ENCODE measurements at regions of chr4 and their contacts with region 1.

Region 1: GRCh38 chr4:102344954-102345794 is at the start of gene SLC39A8:
- DNase-seq: peak; percentile 95
- H3K4me3 Mint-ChIP-seq: peak within 1 kb of the TSS; percentile 78
- H3K27ac Mint-ChIP-seq: peak within 1 kb of the TSS; percentile 96
- H3K4me1 Mint-ChIP-seq: peaks cover 43% of the 10 kb centered on the region
- H3K27me3 Mint-ChIP-seq: peaks cover 1% of the 10 kb centered on the region
- total RNA-seq, gene SLC39A8: 64.6 to 66.9 TPM

Region 2: DNA sequence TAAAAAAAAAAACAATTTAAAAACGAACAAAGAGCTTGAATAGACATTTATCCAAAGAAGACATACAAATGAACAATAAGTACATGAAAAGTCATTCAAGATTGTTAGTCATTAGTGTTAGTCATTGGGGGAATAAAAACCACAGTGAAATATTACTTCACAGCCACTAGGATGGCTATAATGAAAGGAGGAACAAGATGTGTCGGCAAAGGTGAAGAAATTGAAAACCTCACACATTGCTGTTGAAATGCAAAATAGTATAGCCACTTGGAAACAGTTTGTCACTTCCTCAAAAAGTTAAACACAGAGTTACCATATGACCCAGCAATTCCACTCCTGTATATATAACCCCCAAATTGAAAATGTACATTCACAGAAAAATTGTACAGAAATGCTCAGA is 45.3 kb after region 1 on chr4:
- CTCF ChIA-PET with region 1: interaction called, 11 read pairs
- POLR2A ChIA-PET with region 1: interaction called, 4 read pairs
- intact Hi-C with region 1: loop called (anchors 1 kb)
- DNase-seq: no peak
- H3K4me3 Mint-ChIP-seq: no peak overlapping the region
- H3K27ac Mint-ChIP-seq: no peak overlapping the region
- H3K4me1 Mint-ChIP-seq: peaks cover 14% of the 10 kb centered on the region
- H3K27me3 Mint-ChIP-seq: peaks cover 15% of the 10 kb centered on the region

Region 3: DNA sequence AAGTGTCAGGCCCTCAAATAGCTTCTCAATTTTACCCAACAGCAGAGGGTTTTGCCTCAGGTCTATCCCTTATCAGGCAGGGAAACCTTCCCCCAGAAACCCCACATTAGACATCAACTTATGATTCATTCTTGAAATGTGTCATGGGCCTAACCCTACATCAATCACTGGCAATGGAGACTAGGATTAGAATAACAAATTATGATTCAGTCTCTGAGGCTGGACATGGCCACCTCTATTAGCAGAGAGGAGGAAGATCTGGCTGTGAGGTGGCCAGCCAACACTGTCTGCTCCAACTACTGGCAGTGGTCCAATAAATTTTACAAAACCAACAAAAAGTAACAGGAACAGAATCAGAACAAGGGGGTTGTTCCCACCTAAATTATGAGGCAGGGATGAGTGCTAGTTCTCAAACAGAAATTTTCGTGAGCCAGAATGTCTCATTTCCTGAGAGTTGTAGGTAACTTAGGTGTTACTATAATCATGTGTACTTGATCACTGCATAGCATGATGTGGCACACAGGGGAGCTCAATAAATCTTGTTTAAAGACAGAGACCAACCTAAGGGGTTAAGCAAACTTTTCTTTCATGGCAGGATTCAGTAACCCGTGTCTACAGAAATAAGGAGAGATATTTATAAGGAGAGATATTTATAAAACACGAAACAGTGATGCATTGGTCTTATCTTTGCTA is 282.8 kb after region 1 on chr4:
- CTCF ChIA-PET with region 1: interaction called, 6 read pairs
- POLR2A ChIA-PET with region 1: no interaction called
- intact Hi-C with region 1: loop called (anchors 1 kb)
- DNase-seq: peak; percentile 37
- H3K4me3 Mint-ChIP-seq: no peak overlapping the region
- H3K27ac Mint-ChIP-seq: peak overlapping the region; percentile 69
- H3K4me1 Mint-ChIP-seq: peaks cover 67% of the 10 kb centered on the region
- H3K27me3 Mint-ChIP-seq: no peaks in the 10 kb centered on the region

Region 4: DNA sequence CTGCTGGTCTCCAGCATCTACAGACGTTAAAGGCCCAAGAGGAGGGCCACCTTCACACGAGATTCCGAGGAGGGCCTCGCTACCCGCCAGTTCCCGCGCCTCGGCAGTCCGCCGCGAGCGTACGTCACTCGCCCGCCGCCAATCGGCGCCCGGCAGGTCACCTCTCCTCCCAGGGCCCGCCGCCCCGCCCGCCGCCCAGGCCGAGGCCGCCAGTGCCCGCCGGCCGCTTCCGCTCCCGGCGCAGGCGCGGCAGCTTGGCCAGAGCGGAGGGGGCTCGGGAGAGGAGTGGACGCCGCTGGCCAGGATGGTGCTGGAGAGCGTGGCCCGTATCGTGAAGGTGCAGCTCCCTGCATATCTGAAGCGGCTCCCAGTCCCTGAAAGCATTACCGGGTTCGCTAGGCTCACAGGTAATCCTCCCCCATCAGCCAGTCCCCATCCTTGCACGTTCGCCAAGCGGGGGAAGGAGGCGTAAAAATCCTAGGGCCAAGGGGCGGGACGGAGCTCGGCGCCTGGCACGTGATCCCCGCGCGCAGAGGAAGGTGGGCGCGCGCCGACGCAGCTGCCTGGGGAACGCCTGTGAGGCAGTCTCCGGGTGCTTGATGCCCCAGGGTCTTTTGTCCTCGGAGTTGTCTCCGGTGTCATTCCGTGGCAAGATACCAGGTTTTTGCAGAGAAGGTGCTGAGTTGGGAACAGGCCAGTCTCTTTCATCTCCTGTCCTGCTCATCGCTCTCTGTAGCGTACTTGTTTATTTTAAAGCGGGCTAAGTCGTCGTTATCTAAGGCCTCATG is 523.8 kb after region 1 on chr4 and contains the start of gene CISD2:
- CTCF ChIA-PET with region 1: no interaction called
- POLR2A ChIA-PET with region 1: no interaction called
- intact Hi-C with region 1: loop called (anchors 1 kb)
- DNase-seq: peak; percentile 95
- H3K4me3 Mint-ChIP-seq: peak within 1 kb of the TSS; percentile 98
- H3K27ac Mint-ChIP-seq: peak within 1 kb of the TSS; percentile 98
- H3K4me1 Mint-ChIP-seq: peaks cover 54% of the 10 kb centered on the region
- H3K27me3 Mint-ChIP-seq: no peaks in the 10 kb centered on the region
- total RNA-seq, gene CISD2: 28.5 to 32.8 TPM

Region 5: DNA sequence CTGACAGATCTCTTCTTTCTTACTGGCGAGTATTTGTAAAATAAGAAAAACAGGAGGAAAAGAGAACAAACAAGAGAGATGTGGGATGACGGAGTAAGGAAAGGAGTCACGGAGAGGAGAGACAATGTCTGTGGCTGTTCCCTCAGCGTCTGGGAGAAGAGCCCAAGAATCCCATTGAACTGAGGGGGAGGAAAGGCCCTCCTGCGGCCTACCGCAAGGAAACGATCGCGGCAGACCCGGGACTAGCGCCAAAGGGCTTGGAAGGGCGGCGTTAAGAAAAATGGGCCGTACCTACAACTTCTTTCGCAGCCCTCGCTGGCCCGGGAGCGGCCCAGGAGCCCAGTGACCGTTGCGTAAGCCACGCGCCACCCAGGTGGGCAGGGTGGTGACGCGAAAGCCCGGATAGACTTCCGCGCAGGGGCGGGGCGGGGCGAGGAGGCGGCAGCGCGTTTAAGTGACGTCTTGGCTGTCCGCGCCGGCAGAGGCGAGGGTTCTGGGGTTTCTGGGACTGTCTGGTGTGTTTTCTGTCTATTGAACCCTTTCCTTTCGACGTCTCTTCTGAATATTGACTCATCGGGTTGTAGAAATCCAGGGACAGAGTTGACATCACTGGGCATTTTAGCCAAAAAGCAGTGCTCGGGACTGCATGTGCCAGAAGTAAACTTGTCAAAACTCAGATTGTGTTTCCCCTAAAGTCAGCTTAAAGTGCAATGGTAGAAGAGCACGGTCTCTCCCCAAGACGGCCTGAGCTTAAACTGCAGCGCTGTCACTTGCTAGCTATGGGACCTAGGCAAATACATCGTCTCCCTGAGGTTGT is 674.3 kb after region 1 on chr4 and contains the start of gene SLC9B1:
- CTCF ChIA-PET with region 1: no interaction called
- POLR2A ChIA-PET with region 1: no interaction called
- intact Hi-C with region 1: loop called (anchors 1 kb)
- DNase-seq: peak; percentile 97
- H3K4me3 Mint-ChIP-seq: peak within 1 kb of the TSS; percentile 84
- H3K27ac Mint-ChIP-seq: peak within 1 kb of the TSS; percentile 92
- H3K4me1 Mint-ChIP-seq: peaks cover 15% of the 10 kb centered on the region
- H3K27me3 Mint-ChIP-seq: no peaks in the 10 kb centered on the region
- total RNA-seq, gene SLC9B1: 1.9 to 2.4 TPM

Region 6: GRCh38 chr4:103099691-103100392 is 754.7 kb after region 1 on chr4 and contains the start of gene BDH2:
- CTCF ChIA-PET with region 1: interaction called, 5 read pairs
- POLR2A ChIA-PET with region 1: no interaction called
- intact Hi-C with region 1: loop called (anchors 1 kb)
- DNase-seq: peak; percentile 47
- H3K4me3 Mint-ChIP-seq: peak within 1 kb of the TSS; percentile 76
- H3K27ac Mint-ChIP-seq: peak within 1 kb of the TSS; percentile 78
- H3K4me1 Mint-ChIP-seq: peaks cover 17% of the 10 kb centered on the region
- H3K27me3 Mint-ChIP-seq: no peaks in the 10 kb centered on the region
- total RNA-seq, gene BDH2: 14.4 to 15.4 TPM

Measured in activated CD4-positive, alpha-beta memory T cell treated with anti-CD3 and anti-CD28 coated beads for 36 hours (primary cell).